ENCODE measurements at regions of chr1 and their contacts with region 1.

Region 1: GRCh38 chr1:183537405-183537804 is 52.9 kb downstream of the NCF2 start:
- DNase-seq: no peak
- ATAC-seq: no peak
- H3K4me3 ChIP-seq: no peak overlapping the region
- H3K27ac ChIP-seq: no peak overlapping the region
- H3K4me1 ChIP-seq: no peaks in the 10 kb centered on the region
- H3K27me3 ChIP-seq: no peaks in the 10 kb centered on the region
- CTCF ChIP-seq: no peak
- EP300 ChIP-seq: no peak
- POLR2A ChIP-seq: no peak
- RAD21 ChIP-seq: no peak

Region 2: DNA sequence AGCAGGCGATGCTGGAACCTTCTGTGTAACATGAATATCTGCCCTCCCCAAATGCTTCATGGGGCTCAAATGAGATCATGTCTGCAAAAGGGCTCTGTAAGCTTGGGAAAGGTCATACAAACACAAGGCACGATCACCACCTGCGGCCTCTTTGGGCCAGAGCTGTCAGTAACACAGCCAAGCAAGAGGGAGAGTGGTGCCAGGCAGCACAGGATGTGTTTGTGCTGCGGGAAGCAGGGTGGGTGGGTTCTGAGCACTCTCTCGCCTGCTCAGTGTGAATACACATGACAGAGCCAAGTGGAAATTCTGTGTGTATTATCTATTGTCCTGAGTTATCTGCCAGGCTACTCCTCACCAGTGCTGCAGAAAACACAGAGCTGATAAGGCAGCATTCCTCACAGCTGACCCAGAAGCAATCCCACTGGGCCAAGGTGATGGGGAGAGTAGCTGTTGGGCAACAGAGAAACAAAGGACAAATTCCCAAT is 250.2 kb before region 1 on chr1:
- CTCF ChIA-PET with region 1: no interaction called
- POLR2A ChIA-PET with region 1: no interaction called
- in situ Hi-C with region 1: no loop called
- intact Hi-C with region 1: loop called (anchors 5 kb)
- DNase-seq: no peak
- ATAC-seq: no peak
- H3K4me3 ChIP-seq: no peak overlapping the region
- H3K27ac ChIP-seq: no peak overlapping the region
- H3K4me1 ChIP-seq: no peaks in the 10 kb centered on the region
- H3K27me3 ChIP-seq: peaks cover 16 to 53% of the 10 kb centered on the region in 2 experiments; a peak in 4 of 5 replicates
- CTCF ChIP-seq: no peak
- EP300 ChIP-seq: no peak
- POLR2A ChIP-seq: no peak
- RAD21 ChIP-seq: no peak

Region 3: DNA sequence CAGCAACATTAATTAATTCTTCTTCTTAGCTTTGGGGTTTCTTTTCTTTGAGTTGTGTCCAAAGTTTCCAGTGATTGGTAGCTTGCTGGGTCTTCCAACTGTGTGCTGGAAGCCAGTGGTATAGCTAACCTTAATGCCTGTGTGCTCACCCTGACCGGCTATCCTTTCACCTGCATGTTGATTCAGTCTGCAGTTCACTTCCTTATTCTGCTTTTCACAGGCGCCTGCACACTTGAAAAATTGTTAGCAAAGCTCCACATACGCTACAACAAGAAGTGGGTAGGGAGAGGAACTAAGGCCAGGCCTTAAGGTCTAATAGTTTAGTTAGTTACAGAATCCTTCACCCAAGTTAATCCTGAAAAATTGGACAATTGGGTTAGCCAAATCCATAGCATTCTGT is 17.2 kb after region 1 on chr1:
- CTCF ChIA-PET with region 1: no interaction called
- POLR2A ChIA-PET with region 1: no interaction called
- in situ Hi-C with region 1: no loop called
- intact Hi-C with region 1: no loop called
- DNase-seq: no peak
- ATAC-seq: no peak
- H3K4me3 ChIP-seq: no peak overlapping the region
- H3K27ac ChIP-seq: no peak overlapping the region
- H3K4me1 ChIP-seq: peaks cover 6 to 12% of the 10 kb centered on the region in 2 experiments; a peak in 4 of 5 replicates
- H3K27me3 ChIP-seq: no peaks in the 10 kb centered on the region
- CTCF ChIP-seq: no peak
- EP300 ChIP-seq: no peak
- POLR2A ChIP-seq: no peak
- RAD21 ChIP-seq: no peak

Measured in K562 (cell line).